K562 (cell line): ENCODE measurements at regions of chr16 and their contacts with region 1.

Region 1: DNA sequence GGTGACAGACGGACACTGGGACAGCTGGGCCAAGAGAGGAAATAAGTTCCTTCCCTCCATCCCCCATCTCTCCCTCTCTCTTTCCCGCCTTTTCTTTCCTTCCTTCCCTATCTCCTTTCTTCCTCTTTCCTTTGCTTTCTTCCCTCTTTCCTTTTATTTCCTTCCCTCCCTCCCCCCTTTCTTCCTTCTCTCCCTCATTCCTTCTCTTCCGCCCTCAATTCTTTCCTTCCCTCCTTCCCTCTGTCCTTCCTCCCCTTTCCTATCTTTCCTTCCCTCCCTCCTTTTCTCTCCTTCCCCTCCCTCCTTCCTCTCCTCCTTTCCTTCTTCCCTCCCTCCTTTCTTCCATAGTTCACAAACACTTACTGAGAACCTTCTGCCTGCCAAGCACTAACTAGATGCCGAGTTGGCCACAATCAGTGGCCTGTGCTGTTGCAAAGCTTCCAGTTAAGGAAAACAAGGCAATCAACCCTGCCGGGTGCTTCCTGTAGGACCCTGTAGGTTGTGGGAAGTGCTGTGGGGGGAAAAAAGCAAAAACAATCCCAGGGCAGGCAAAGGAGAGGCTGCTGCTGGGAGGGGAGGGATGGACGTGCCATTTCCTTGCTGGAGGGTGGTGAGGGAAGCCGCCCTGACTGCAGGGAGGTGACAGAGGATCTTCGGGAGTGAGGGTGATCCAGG is 31.7 kb downstream of the ABCC6 start:
- DNase-seq: no peak
- ATAC-seq: no peak
- H3K4me3 ChIP-seq: no peak overlapping the region
- H3K27ac ChIP-seq: no peak overlapping the region
- H3K4me1 ChIP-seq: peaks cover 8 to 16% of the 10 kb centered on the region in 2 experiments; a peak in 4 of 5 replicates
- H3K27me3 ChIP-seq: no peaks in the 10 kb centered on the region; a peak in 1 of 5 replicates
- CTCF ChIP-seq: no peak
- EP300 ChIP-seq: no peak
- POLR2A ChIP-seq: no peak
- RAD21 ChIP-seq: no peak

Region 2: GRCh38 chr16:15765880-15766279 is 425.8 kb before region 1 on chr16:
- CTCF ChIA-PET with region 1: interaction called, 3 read pairs
- POLR2A ChIA-PET with region 1: no interaction called
- in situ Hi-C with region 1: no loop called
- intact Hi-C with region 1: loop called (anchors 5 kb)
- DNase-seq: peak; percentile 45 to 72 (median 58)
- ATAC-seq: peak; percentile 97
- H3K4me3 ChIP-seq: no peak overlapping the region
- H3K27ac ChIP-seq: no peak overlapping the region
- H3K4me1 ChIP-seq: no peaks in the 10 kb centered on the region; a peak in 1 of 5 replicates
- H3K27me3 ChIP-seq: peaks cover 10 to 13% of the 10 kb centered on the region in 2 experiments; a peak in 4 of 5 replicates
- CTCF ChIP-seq: peak; percentile 79 to 88 (median 85)
- EP300 ChIP-seq: no peak
- POLR2A ChIP-seq: no peak
- RAD21 ChIP-seq: peak; percentile 70 to 85

Region 3: DNA sequence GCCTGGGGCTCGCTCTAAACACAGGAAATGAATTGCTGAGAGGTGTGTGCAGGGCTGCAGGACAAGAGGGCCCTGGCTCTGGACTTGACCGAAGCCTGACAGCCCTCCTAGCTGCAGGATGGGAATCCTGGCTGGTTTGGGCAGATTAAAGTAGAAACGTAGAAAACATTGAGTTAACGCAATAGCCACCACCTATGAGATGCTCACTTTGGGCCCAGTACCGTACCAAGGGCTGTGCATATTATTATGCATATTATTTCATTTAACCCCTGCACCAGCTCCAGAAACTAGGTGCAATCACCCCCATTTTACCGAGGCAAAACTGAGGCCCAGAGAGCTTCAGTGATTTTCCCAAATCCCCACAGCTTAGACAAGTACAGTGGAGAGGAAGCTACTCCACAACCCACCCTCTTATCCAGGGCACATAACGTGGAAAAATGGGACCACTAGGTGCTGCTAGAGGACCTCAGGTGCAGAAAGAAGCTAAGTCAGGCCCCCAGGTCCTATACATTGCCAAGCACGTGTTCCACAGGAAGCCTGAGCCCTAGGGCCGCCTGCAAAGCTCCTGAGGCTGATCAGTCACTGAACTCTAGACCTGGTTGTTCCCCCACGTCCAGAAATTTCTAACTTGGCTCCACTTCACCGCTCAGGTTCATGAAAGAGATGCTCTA is 414.0 kb before region 1 on chr16:
- CTCF ChIA-PET with region 1: no interaction called
- POLR2A ChIA-PET with region 1: no interaction called
- in situ Hi-C with region 1: loop called (anchors 5 kb)
- intact Hi-C with region 1: no loop called
- DNase-seq: peak; percentile 65 to 76 (median 66)
- ATAC-seq: peak; percentile 97
- H3K4me3 ChIP-seq: no peak overlapping the region
- H3K27ac ChIP-seq: no peak overlapping the region
- H3K4me1 ChIP-seq: peaks cover 0 to 3% of the 10 kb centered on the region in 2 experiments; a peak in 2 of 5 replicates
- H3K27me3 ChIP-seq: peaks cover 15 to 49% of the 10 kb centered on the region in 2 experiments
- CTCF ChIP-seq: peak; percentile 79 to 85 (median 81)
- EP300 ChIP-seq: no peak
- POLR2A ChIP-seq: no peak
- RAD21 ChIP-seq: peak; percentile 59 to 89

Region 4: GRCh38 chr16:15847611-15848175 is 343.9 kb before region 1 on chr16:
- CTCF ChIA-PET with region 1: no interaction called
- POLR2A ChIA-PET with region 1: no interaction called
- in situ Hi-C with region 1: no loop called
- intact Hi-C with region 1: no loop called
- DNase-seq: no peak
- ATAC-seq: no peak
- H3K4me3 ChIP-seq: no peak overlapping the region
- H3K27ac ChIP-seq: no peak overlapping the region
- H3K4me1 ChIP-seq: no peaks in the 10 kb centered on the region
- H3K27me3 ChIP-seq: peaks cover 22 to 67% of the 10 kb centered on the region in 2 experiments; a peak in 4 of 5 replicates
- CTCF ChIP-seq: no peak
- EP300 ChIP-seq: no peak
- POLR2A ChIP-seq: no peak
- RAD21 ChIP-seq: no peak